HCT116 (cell line): ENCODE measurements at regions of chr7 and their contacts with region 1.

Region 1: DNA sequence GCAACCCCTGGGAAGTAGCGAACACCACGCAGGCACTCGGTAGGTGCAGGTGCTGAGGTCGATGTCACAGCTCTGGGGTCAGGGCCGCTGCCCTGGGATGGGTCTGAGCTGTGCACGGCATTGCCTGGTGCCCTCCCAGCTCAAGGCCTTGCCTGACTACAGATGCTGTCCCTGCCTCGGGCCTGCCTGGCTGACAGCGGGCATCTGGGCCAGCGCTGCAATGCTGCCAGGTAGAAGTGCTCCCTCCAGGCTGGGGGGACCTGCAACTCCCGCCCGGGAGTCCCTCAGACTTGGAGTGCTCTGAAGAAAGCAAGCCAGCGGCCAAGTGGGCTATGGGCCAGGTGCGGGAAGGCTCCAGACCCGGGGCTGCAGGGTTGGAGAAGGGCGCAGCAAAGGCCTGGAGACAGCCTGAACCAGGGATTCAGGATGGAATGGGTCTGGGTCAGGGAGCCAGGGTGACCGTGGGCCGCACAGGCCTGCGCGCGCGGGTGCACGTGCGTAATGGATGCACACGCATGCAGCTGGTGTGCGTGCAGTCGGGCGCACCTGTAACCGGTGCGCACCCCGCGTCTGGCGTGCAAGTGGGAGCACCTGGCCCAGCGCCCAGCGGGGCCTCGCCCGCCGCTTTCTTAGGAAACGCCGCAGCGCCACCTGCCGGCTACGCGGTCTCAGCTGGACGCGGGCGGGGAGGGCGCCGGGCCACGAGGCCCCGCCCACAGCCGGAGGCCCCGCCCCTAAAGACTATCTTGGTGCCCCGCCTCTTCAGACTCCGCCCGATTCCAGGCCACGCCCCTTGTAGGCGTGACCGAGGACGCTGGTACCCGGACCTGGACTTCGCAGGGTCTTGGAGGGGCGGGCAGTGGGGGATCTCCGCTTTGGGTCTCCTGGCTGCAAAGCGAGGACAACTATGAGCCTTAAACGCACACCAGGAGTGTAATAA is 46.7 kb downstream of the MICALL2 start:
- DNase-seq: peak; percentile 77
- ATAC-seq: peak; percentile 96
- H3K4me3 ChIP-seq: peak overlapping the region in 1 of 2 experiments; percentile 5; a peak in 1 of 4 replicates
- H3K27ac ChIP-seq: 0 out of 2 replicates have a peak overlapping the region, but pooled peaks have one; percentile 1
- H3K4me1 ChIP-seq: peaks cover 2 to 15% of the 10 kb centered on the region in 2 experiments; a peak in 2 of 4 replicates
- H3K27me3 ChIP-seq: no peaks in the 10 kb centered on the region
- CTCF ChIP-seq: peak; percentile 77 to 91 (median 87)
- POLR2A ChIP-seq: no peak
- RAD21 ChIP-seq: peak; percentile 96

Region 2: GRCh38 chr7:1225441-1226185 is 187.0 kb before region 1 on chr7:
- CTCF ChIA-PET with region 1: interaction called, 4 read pairs
- POLR2A ChIA-PET with region 1: no interaction called
- RAD21 ChIA-PET with region 1: no interaction called
- intact Hi-C with region 1: loop called (anchors 1 kb)
- DNase-seq: no peak
- ATAC-seq: peak; percentile 95
- H3K4me3 ChIP-seq: no peak overlapping the region
- H3K27ac ChIP-seq: no peak overlapping the region
- H3K4me1 ChIP-seq: no peaks in the 10 kb centered on the region
- H3K27me3 ChIP-seq: no peaks in the 10 kb centered on the region
- CTCF ChIP-seq: peak; percentile 87 to 94 (median 89)
- POLR2A ChIP-seq: no peak
- RAD21 ChIP-seq: peak; percentile 92